ENCODE measurements at regions of chr6 and their contacts with region 1.

Region 1: GRCh38 chr6:131199568-131200272 is 64.5 kb downstream of the AKAP7 start:
- DNase-seq: peak; percentile 85
- ATAC-seq: peak; percentile 98
- H3K4me3 Mint-ChIP-seq: peak overlapping the region; percentile 76
- H3K27ac Mint-ChIP-seq: peak overlapping the region; percentile 95
- H3K4me1 Mint-ChIP-seq: peaks cover 54% of the 10 kb centered on the region
- H3K27me3 Mint-ChIP-seq: no peaks in the 10 kb centered on the region
- CTCF ChIP-seq: peak; percentile 79

Region 2: GRCh38 chr6:131135244-131136020 is 64.3 kb before region 1 on chr6 and contains the start of gene AKAP7:
- CTCF ChIA-PET with region 1: no interaction called
- POLR2A ChIA-PET with region 1: no interaction called
- intact Hi-C with region 1: no loop called
- DNase-seq: peak; percentile 70
- ATAC-seq: peak; percentile 82
- H3K4me3 Mint-ChIP-seq: peak within 1 kb of the TSS; percentile 86
- H3K27ac Mint-ChIP-seq: peak within 1 kb of the TSS; percentile 95
- H3K4me1 Mint-ChIP-seq: peaks cover 9% of the 10 kb centered on the region
- H3K27me3 Mint-ChIP-seq: no peaks in the 10 kb centered on the region
- CTCF ChIP-seq: no peak
- total RNA-seq, gene AKAP7: 6.2 to 6.5 TPM

Region 3: DNA sequence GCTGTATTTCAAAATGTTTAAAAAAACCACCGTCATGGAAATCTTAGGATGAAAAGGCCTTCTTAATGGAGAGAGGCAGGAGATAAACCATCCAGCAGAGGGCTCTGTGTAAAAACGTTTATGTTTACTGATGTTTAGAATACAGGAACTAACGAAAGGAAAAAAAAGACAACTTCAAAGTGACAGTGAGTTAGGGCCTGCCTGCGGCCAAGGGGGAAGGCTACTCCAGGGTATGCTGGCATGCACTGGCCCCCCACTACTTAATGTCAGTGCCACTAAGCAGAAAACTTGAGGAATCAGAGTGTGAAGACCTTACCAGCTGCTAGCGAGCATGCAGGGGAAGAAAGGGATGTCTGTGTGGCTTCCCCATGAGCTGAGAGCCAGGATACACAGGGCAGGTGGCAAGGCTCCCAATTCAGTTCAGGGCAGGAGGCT is 16.7 kb before region 1 on chr6:
- CTCF ChIA-PET with region 1: interaction called, 31 read pairs
- POLR2A ChIA-PET with region 1: no interaction called
- intact Hi-C with region 1: no loop called
- DNase-seq: peak; percentile 33
- ATAC-seq: peak; percentile 66
- H3K4me3 Mint-ChIP-seq: no peak overlapping the region
- H3K27ac Mint-ChIP-seq: peak overlapping the region; percentile 55
- H3K4me1 Mint-ChIP-seq: peaks cover 9% of the 10 kb centered on the region
- H3K27me3 Mint-ChIP-seq: no peaks in the 10 kb centered on the region
- CTCF ChIP-seq: peak; percentile 58

Region 4: GRCh38 chr6:131231103-131231502 is 31.4 kb after region 1 on chr6:
- CTCF ChIA-PET with region 1: no interaction called
- POLR2A ChIA-PET with region 1: no interaction called
- intact Hi-C with region 1: no loop called
- DNase-seq: no peak
- ATAC-seq: no peak
- H3K4me3 Mint-ChIP-seq: no peak overlapping the region
- H3K27ac Mint-ChIP-seq: no peak overlapping the region
- H3K4me1 Mint-ChIP-seq: peaks cover 13% of the 10 kb centered on the region
- H3K27me3 Mint-ChIP-seq: no peaks in the 10 kb centered on the region
- CTCF ChIP-seq: no peak

Region 5: GRCh38 chr6:131262065-131262464 is 62.3 kb after region 1 on chr6:
- CTCF ChIA-PET with region 1: no interaction called
- POLR2A ChIA-PET with region 1: no interaction called
- intact Hi-C with region 1: loop called (anchors 10 kb)
- DNase-seq: no peak
- ATAC-seq: no peak
- H3K4me3 Mint-ChIP-seq: no peak overlapping the region
- H3K27ac Mint-ChIP-seq: no peak overlapping the region
- H3K4me1 Mint-ChIP-seq: peaks cover 13% of the 10 kb centered on the region
- H3K27me3 Mint-ChIP-seq: no peaks in the 10 kb centered on the region
- CTCF ChIP-seq: no peak

Region 6: GRCh38 chr6:131281471-131282270 is 82.0 kb after region 1 on chr6:
- CTCF ChIA-PET with region 1: interaction called, 15 read pairs
- POLR2A ChIA-PET with region 1: no interaction called
- intact Hi-C with region 1: no loop called
- DNase-seq: peak; percentile 81
- ATAC-seq: peak; percentile 94
- H3K4me3 Mint-ChIP-seq: peak overlapping the region; percentile 63
- H3K27ac Mint-ChIP-seq: peak overlapping the region; percentile 96
- H3K4me1 Mint-ChIP-seq: peaks cover 37% of the 10 kb centered on the region
- H3K27me3 Mint-ChIP-seq: no peaks in the 10 kb centered on the region
- CTCF ChIP-seq: no peak

Region 7: DNA sequence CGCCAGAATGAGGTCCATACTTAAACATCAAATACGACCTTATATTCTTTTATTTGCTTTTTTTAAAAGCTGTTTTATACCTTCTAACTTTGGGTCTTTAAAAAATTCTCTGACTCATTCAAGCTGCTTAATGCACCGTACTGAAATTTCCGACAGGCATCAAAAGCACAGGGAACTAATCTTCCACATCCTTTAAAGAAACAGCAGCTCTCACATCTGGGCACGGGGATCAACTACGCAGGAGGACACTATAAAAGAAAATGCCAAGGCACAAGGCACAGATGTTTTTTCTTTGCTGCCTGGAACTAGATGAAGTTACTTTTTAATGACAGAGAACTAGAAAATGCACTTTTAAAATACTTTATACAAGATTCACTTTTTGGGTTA is 260.9 kb after region 1 on chr6:
- CTCF ChIA-PET with region 1: interaction called, 12 read pairs
- POLR2A ChIA-PET with region 1: interaction called, 7 read pairs
- intact Hi-C with region 1: no loop called
- DNase-seq: no peak
- ATAC-seq: no peak
- H3K4me3 Mint-ChIP-seq: no peak overlapping the region
- H3K27ac Mint-ChIP-seq: no peak overlapping the region
- H3K4me1 Mint-ChIP-seq: peaks cover 4% of the 10 kb centered on the region
- H3K27me3 Mint-ChIP-seq: no peaks in the 10 kb centered on the region
- CTCF ChIP-seq: no peak